ENCODE measurements at regions of chr1 and their contacts with region 1.

Region 1: GRCh38 chr1:1115786-1116700 is at the start of gene C1orf159:
- DNase-seq: peak; percentile 97
- H3K4me3 ChIP-seq: peak within 1 kb of the TSS; percentile 44 to 59 (median 57)
- H3K27ac ChIP-seq: peak within 1 kb of the TSS; percentile 12
- H3K4me1 ChIP-seq: no peaks in the 10 kb centered on the region
- H3K27me3 ChIP-seq: peaks cover 0 to 2% of the 10 kb centered on the region in 2 experiments
- CTCF ChIP-seq: peak in 1 of 2 donors; percentile 2
- POLR2A ChIP-seq: no peak
- total RNA-seq, gene C1orf159: 19.7 and 20.1 TPM in 2 replicates

Region 2: DNA sequence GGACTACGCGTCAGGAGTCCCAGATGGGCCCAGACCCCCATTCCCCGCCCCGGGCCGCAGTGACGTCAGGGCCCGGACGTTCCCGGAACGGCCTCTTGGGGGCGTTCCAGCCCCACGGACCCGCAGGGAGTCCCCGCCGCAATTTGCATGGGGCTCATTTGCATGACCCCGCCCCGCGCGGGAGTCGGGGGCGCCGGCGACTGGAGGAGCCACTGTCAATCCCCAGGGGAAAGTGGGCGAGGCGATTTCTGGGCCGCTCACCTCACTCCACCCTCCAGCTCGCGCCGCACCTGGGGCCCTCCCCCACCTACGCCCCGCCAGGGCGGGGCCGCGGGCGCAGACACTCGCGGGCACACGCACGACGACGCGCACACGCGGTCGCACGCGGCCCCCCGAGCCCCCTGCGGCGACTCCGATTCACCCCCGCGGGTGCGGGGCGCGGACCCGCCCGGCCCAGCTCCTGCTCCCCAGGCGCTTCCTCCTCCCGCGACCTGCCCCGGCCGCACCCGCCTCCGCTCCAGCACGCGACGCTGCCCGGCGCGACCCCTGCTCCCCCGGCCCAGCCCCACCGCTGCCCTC is 82.9 kb before region 1 on chr1:
- CTCF ChIA-PET with region 1: no interaction called
- POLR2A ChIA-PET with region 1: no interaction called
- dilution Hi-C with region 1: no loop called
- intact Hi-C with region 1: loop called (anchors 2 kb)
- DNase-seq: peak; percentile 80
- H3K4me3 ChIP-seq: peak overlapping the region in 1 of 3 experiments; percentile 20
- H3K27ac ChIP-seq: no peak overlapping the region
- H3K4me1 ChIP-seq: no peaks in the 10 kb centered on the region
- H3K27me3 ChIP-seq: no peaks in the 10 kb centered on the region
- CTCF ChIP-seq: peak; percentile 76 to 90
- POLR2A ChIP-seq: no peak

Region 3: DNA sequence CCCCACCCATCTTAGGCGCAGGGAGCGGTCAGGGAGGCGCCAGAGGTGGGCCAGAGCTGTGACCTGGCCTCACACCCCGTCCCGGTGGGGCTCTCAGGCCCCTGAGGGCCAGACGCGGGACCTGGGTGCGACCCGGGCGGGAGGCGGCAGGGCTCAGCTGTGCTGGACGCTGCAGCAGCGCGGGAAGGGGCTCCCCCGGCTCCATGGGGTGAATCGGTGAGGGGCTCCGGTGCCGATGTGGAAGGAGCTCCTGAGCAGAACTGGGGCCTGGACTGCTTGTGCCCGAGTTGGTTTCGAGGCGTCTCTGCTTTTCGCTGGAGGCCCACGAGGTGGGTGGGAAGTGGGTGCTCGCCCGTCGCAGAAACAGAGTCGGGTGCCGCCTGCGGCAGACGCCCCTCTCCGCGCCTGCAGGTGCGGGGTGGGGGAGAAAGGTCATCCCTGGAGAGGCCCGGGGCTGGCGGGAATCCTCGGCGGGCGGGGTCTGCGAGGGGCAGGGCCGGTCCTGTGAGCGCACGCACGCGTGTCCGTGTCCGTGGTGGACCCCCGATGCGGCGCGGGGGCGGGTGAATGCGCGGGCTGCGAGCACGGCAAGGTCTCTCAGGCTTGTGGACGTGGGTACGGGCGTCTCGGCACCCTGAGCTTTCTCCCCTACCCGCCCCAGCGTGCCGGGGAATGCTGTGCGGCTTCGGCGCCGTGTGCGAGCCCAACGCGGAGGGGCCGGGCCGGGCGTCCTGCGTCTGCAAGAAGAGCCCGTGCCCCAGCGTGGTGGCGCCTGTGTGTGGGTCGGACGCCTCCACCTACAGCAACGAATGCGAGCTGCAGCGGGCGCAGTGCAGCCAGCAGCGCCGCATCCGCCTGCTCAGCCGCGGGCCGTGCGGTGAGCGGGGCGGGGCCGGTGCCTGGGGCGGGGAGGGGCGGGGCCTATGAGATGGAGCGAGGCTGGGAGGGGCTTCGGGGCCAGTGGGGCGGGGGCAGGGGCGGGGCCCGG is 75.7 kb before region 1 on chr1:
- CTCF ChIA-PET with region 1: no interaction called
- POLR2A ChIA-PET with region 1: no interaction called
- dilution Hi-C with region 1: no loop called
- intact Hi-C with region 1: loop called (anchors 2 kb)
- DNase-seq: peak; percentile 84
- H3K4me3 ChIP-seq: peak overlapping the region in 1 of 3 experiments; percentile 8
- H3K27ac ChIP-seq: no peak overlapping the region
- H3K4me1 ChIP-seq: peaks cover 7% of the 10 kb centered on the region
- H3K27me3 ChIP-seq: no peaks in the 10 kb centered on the region
- CTCF ChIP-seq: peak in 1 of 2 donors; percentile 27
- POLR2A ChIP-seq: no peak

Region 4: GRCh38 chr1:1059494-1060280 is 56.4 kb before region 1 on chr1:
- CTCF ChIA-PET with region 1: interaction called, 4 read pairs
- POLR2A ChIA-PET with region 1: no interaction called
- dilution Hi-C with region 1: no loop called
- intact Hi-C with region 1: loop called (anchors 5 kb)
- DNase-seq: peak; percentile 70
- H3K4me3 ChIP-seq: peak overlapping the region; percentile 35 to 51 (median 43)
- H3K27ac ChIP-seq: no peak overlapping the region
- H3K4me1 ChIP-seq: peaks cover 16% of the 10 kb centered on the region
- H3K27me3 ChIP-seq: peaks cover 0 to 10% of the 10 kb centered on the region in 2 experiments
- CTCF ChIP-seq: no peak
- POLR2A ChIP-seq: no peak

Region 5: GRCh38 chr1:1079408-1080121 is 36.5 kb before region 1 on chr1:
- CTCF ChIA-PET with region 1: no interaction called
- POLR2A ChIA-PET with region 1: no interaction called
- dilution Hi-C with region 1: no loop called
- intact Hi-C with region 1: loop called (anchors 2 kb)
- DNase-seq: peak; percentile 59
- H3K4me3 ChIP-seq: no peak overlapping the region
- H3K27ac ChIP-seq: no peak overlapping the region
- H3K4me1 ChIP-seq: peaks cover 2% of the 10 kb centered on the region
- H3K27me3 ChIP-seq: no peaks in the 10 kb centered on the region
- CTCF ChIP-seq: no peak
- POLR2A ChIP-seq: no peak